Pancreas (tissue), 10 donors: ENCODE measurements at regions of chr10 and their contacts with region 1.

Region 1: DNA sequence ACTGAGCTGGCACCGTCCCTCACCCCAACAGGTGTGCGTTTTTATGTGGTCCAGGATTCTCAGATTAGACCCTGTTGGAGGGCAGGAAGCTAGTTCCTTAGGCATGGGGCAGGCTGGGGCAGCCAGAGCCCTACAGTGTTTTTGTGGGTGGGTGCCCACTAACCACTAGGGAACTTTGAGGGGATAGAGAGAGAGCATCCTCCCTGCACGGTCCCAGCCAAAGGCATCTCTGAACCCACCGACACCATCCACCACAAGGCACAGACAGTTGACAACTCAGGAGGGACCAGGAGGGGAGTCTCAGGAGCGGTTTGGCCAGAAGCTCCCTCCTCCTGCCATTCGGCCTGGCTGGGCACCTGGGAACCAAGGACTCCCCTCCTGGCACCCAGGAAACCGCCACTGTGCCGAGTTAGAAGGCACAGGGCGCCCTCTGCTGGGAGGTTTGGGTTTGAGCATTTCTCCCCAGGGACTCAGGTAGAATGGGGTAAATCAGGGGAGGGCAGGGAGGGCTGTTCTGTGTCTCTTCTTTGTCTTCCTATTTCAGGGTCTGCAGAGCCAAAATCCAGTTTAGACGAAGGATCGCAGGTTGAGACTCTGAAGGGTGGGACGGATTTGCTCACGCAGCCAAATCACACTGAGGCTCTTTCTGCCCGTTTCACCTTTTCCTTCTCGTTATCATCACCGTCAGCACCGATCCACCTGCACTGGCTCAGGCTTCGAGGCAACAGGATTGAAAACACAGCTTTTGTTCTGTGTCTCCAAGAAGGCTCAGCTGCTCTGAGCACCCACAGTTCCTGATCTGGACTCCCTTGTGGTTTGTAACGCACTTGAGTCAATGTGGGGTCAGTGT is 84.8 kb upstream of the COL13A1 start:
- DNase-seq: peak; percentile 41 to 89 (median 76)
- ATAC-seq: peak; percentile 75 to 96 (median 90)
- H3K4me3 ChIP-seq: no peak overlapping the region
- H3K27ac ChIP-seq: no peak overlapping the region
- H3K4me1 ChIP-seq: no peaks in the 10 kb centered on the region
- H3K27me3 ChIP-seq: no peaks in the 10 kb centered on the region
- CTCF ChIP-seq: peak; percentile 58 to 74 (median 66)

Region 2: GRCh38 chr10:69515699-69516259 is 201.2 kb before region 1 on chr10:
- intact Hi-C with region 1: loop called in 2 of 3 experiments (anchors 10 kb)
- DNase-seq: peak; percentile 52 to 88 (median 78)
- ATAC-seq: peak; percentile 90 to 98 (median 96)
- H3K4me3 ChIP-seq: no peak overlapping the region
- H3K27ac ChIP-seq: no peak overlapping the region
- H3K4me1 ChIP-seq: no peaks in the 10 kb centered on the region
- H3K27me3 ChIP-seq: no peaks in the 10 kb centered on the region
- CTCF ChIP-seq: peak; percentile 46 to 82 (median 70)

Region 3: DNA sequence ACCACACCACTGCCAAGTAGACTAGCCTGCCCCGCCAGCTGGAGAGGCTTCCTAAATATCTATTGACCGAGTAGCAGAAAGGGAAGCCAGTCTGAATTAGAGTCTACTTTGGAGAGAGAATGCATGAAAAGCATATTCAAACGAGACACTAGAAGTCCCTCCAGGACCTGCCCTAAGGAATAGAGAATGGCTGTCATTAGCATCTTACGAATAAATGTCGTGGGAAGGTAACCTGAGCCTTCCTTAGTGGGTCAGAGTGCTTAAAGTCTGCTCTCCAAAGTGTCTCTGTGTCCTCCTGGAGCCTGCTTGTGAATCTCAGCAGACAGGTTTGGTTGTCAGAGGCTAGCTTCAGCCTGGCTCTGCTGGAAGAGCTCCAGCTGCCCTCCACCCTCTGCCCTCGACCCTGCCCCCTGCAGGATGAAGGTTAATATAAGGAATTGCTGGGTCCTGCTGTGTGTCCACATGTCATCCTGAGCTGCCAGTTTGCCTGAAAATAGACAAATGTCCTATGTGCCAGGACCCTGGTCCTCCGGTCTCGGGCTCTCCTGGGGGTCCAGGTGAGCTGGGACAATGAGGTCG is 53.5 kb before region 1 on chr10:
- intact Hi-C with region 1: no loop called
- DNase-seq: no peak
- ATAC-seq: no peak
- H3K4me3 ChIP-seq: no peak overlapping the region
- H3K27ac ChIP-seq: no peak overlapping the region
- H3K4me1 ChIP-seq: peaks cover 8 to 10% (median 10%) of the 10 kb centered on the region in 3 donors
- H3K27me3 ChIP-seq: no peaks in the 10 kb centered on the region
- CTCF ChIP-seq: no peak

Region 4: DNA sequence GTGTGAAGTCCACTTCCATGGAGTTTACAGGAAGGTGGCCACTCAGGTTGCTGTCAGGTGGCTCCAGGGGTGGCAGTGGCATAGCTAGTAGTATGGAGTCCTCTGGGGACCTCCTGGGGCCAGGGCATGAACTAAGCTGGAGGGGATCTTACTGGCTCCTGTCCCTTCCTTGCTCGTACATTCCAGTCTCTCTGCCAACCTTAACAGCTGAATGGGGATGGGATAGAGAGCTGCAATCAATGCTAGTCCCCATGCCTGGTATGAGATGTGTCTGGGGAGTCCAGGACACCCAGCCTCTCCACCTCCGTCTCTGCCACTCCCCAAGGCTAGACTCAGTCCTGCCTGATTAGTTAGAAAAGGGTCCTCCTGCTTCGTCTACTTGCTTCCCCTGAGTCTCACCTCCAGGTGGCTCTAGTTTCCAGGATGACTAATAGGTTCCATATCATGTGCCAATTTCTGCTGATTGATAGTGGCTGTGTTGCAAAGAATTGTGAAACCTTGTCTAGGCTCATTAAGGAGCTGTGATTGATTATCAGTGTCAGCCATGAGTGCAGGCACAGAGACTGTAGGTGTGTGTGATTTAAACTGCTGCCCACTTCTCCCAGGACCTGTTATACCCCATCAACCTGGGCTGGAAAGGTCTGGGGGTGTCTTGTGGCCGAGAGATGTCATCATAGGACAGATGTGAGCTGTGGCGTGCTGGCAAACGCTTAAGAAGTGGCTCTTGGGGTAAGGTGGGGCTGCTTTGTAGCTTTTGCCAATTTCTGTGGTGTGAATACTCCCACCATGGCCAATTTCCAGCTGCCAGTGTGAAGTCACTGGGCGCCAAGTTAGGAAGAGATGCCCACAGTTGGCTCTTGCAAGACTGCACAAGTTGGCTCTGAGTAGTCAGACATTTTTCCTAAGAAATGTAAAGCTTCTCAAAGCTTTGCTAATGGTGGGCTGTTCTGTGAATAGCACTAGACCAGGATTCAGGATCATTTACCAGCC is 144.6 kb after region 1 on chr10:
- intact Hi-C with region 1: no loop called
- DNase-seq: peak in 2 of 6 donors; percentile 32 to 68
- ATAC-seq: peak; percentile 87 to 91 (median 90)
- H3K4me3 ChIP-seq: no peak overlapping the region
- H3K27ac ChIP-seq: peak overlapping the region in 1 of 4 donors; percentile 17
- H3K4me1 ChIP-seq: no peaks in the 10 kb centered on the region
- H3K27me3 ChIP-seq: no peaks in the 10 kb centered on the region
- CTCF ChIP-seq: peak in 2 of 4 donors; percentile 22 to 37

Region 5: DNA sequence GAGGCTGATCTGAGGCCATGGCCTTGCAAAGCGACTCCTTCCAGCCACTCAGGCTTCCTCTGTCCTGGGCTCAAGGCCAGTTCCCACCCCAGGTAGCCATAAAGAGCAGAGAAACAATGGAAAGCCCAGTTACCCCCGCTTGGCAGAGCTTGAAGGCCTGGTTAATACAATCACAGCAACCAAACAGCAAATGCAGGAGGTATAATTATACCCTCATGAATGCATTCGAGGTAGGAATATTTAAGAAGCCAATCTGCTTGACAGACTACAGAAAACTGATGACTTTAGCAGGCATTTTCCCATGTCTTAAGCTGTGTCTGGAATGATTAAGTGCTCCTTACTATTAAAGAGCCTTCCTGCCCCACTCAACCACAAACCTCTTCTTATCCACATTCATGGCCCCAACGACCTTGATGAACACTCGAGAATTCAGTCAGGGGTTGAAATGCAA is 221.6 kb after region 1 on chr10:
- intact Hi-C with region 1: no loop called
- DNase-seq: peak in 3 of 6 donors; percentile 24 to 44 (median 25)
- ATAC-seq: peak in 3 of 4 donors; percentile 63 to 83 (median 68)
- H3K4me3 ChIP-seq: no peak overlapping the region
- H3K27ac ChIP-seq: no peak overlapping the region
- H3K4me1 ChIP-seq: no peaks in the 10 kb centered on the region
- H3K27me3 ChIP-seq: no peaks in the 10 kb centered on the region
- CTCF ChIP-seq: no peak